SK-N-SH (cell line): ENCODE measurements at regions of chr20 and their contacts with region 1.

Region 1: GRCh38 chr20:31630187-31630790 is 7.4 kb upstream of the COX4I2 start:
- DNase-seq: no peak
- H3K4me3 ChIP-seq: no peak overlapping the region
- H3K27ac ChIP-seq: peak overlapping the region in 1 of 2 experiments; percentile 16; a peak in 1 of 4 replicates
- H3K4me1 ChIP-seq: peaks cover 0 to 6% of the 10 kb centered on the region in 2 experiments; a peak in 1 of 4 replicates
- H3K27me3 ChIP-seq: no peaks in the 10 kb centered on the region
- CTCF ChIP-seq: no peak
- EP300 ChIP-seq: no peak
- RAD21 ChIP-seq: no peak

Region 2: GRCh38 chr20:31644701-31645100 is 14.4 kb after region 1 on chr20:
- CTCF ChIA-PET with region 1: interaction called, 64 read pairs
- POLR2A ChIA-PET with region 1: no interaction called
- DNase-seq: no peak
- H3K4me3 ChIP-seq: no peak overlapping the region
- H3K27ac ChIP-seq: no peak overlapping the region
- H3K4me1 ChIP-seq: peaks cover 0 to 12% of the 10 kb centered on the region in 2 experiments; a peak in 1 of 4 replicates
- H3K27me3 ChIP-seq: no peaks in the 10 kb centered on the region
- CTCF ChIP-seq: no peak
- EP300 ChIP-seq: no peak
- RAD21 ChIP-seq: no peak

Region 3: DNA sequence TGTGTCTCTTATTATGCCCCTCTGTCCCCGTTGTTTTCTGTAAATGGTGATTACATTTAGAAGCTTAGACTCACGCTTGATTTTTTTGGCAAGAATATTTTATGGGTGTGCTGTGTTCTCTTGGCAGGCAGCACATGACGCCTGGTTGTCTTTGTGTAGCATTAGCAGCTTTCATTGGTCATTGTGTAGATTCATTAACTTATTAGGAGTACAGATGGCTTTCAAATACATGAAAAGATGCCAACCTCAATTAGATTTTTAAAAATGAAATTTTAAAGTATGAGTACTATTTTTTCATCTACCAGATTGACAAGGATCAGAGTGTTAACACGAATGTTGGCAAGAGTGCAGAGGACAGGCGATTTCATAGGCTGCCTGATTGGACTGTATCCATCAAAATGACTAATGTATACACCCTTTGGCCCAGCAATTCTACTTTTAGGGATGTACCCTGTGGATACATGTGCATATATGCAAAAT is 22.7 kb after region 1 on chr20:
- CTCF ChIA-PET with region 1: interaction called, 64 read pairs
- POLR2A ChIA-PET with region 1: interaction called, 3 read pairs
- DNase-seq: peak; percentile 67
- H3K4me3 ChIP-seq: no peak overlapping the region
- H3K27ac ChIP-seq: peak overlapping the region; percentile 34 to 86; a peak in 3 of 4 replicates
- H3K4me1 ChIP-seq: peaks cover 12 to 23% of the 10 kb centered on the region in 2 experiments; a peak in 3 of 4 replicates
- H3K27me3 ChIP-seq: no peaks in the 10 kb centered on the region
- CTCF ChIP-seq: no peak
- EP300 ChIP-seq: peak in 1 of 2 experiments; percentile 95; a peak in 2 of 4 replicates
- RAD21 ChIP-seq: no peak; the same call in 1 of the 2 replicates